ENCODE measurements at regions of chr2 and their contacts with region 1.

Region 1: GRCh38 chr2:238449909-238450417 is 23.2 kb downstream of the ASB1 start:
- DNase-seq: no peak
- H3K4me3 ChIP-seq: no peak overlapping the region
- CTCF ChIP-seq: no peak

Region 2: DNA sequence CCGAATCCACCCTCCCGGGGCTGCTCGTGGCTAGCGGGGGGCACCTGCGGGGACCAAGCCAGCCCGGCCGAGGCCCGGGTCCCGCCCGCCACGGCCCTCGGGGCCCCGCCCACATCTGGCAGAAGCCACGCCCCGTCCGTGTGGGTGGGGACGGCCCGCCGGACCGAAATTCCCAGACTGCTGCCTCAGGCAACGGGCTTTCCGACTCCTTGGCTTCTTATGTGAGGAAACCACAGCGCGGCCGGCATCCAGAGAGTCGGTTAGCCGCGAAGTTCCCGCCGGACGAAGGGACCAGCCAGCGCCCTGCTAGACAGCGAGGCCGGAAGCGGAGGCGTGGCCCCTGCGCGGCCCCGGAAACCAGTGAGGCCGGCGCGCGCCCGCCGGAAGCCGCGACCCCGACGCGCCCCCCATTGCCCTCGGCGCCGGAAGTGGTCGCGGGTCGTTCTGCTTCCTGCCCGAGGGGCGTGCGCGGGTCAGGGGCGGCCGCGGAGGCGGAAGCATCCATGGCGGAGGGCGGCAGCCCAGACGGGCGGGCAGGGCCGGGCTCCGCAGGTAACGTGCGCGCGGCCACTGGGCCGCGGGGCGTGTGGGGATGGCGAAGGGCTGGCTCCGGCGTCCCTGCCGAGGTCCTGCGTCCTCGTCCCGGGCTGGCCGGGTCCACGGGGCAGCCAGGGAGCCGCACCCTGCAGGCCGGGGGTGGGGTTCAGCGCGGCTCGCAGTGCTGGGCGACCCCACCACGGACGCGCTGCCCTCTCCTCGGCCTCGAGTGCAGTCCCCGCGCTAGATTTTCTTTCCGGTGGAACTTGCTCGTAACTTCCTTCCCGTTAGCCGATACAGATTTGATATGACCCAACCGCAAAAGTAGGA is 23.2 kb before region 1 on chr2 and contains the start of gene ASB1:
- CTCF ChIA-PET with region 1: no interaction called
- POLR2A ChIA-PET with region 1: no interaction called
- DNase-seq: no peak
- H3K4me3 ChIP-seq: peak within 1 kb of the TSS; percentile 92
- CTCF ChIP-seq: no peak

Region 3: DNA sequence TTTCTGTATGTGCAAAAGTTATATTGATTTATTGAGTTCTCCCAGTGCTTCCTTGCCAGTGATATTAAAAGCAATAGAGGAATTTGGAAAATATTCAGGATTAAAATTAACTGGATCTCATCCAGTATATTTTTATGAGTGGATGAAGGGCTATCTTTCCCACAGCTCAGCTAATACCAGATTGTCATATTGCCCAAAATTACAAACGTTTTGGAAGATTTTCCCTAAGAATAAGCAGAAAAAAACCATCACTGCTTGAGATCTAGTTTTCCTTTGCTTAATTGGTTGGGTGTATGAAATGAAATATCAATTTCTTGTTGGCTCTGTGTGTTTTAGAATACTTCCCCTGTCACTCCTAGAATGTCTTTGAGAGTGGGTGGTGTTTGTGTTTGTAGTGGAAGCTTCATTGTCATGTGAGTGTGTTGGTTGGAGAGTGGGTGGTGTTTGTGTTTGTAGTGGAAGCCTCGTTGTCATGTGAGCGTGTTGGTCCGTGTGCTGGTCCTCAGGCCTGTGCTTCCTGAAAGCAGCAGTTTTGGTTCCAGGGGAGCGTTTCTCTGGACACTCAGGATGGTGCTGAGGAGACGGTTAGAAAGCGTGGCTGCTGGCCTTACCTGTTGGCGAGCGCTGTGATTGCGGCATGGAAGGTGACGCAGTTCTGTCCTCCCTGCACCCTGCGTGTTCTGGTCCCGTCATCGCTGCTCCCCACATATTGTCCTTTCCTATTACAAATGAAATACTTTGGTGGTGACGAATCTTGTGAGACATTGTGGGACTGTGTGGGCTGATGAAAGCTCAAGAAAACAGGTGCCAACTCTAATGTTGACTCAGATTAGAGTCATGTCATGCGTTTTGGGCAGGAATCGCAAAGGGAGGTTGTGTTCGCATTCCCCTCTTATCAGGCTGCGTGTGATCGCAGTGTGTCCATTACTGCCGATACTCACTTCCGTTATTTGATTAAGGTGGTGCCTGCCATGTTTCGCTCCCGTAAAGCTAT is 10.8 kb before region 1 on chr2:
- CTCF ChIA-PET with region 1: interaction called, 10 read pairs
- POLR2A ChIA-PET with region 1: no interaction called
- DNase-seq: no peak
- H3K4me3 ChIP-seq: no peak overlapping the region
- CTCF ChIP-seq: no peak

Measured in AG04449 (cell line).